Common myeloid progenitor, CD34-positive (primary cell): ENCODE measurements at regions of chr1 and their contacts with region 1.

Region 1: DNA sequence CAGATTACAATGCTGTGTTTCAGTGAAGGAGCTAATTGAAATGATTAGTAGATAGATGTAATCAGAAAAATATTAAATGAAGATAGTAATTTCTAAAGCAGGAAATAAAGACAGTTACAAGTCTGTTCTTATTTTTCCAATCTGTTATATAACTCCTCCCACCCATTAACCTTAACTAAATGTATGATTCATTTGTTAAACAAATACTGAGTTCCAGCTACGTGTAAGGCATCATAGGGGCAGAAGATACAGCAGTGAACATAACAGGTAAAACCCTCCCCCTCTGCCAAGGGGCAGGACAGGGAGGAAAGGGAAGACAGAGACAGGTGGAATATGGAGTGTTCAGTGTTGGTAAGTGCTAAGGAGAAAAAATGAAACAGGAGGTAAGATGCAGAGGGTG is at the start of gene FAM177B:
- DNase-seq: no peak
- H3K4me3 ChIP-seq: no peak within 1 kb of the TSS
- H3K27ac ChIP-seq: no peak within 1 kb of the TSS
- H3K4me1 ChIP-seq: no peaks in the 10 kb centered on the region
- H3K27me3 ChIP-seq: no peaks in the 10 kb centered on the region

Region 2: GRCh38 chr1:222750651-222751050 is 13.7 kb after region 1 on chr1:
- CTCF ChIA-PET with region 1: interaction called, 11 read pairs
- POLR2A ChIA-PET with region 1: no interaction called
- DNase-seq: no peak
- H3K4me3 ChIP-seq: no peak overlapping the region
- H3K27ac ChIP-seq: no peak overlapping the region
- H3K4me1 ChIP-seq: peaks cover 0 to 6% (median 3%) of the 10 kb centered on the region in 4 experiments
- H3K27me3 ChIP-seq: no peaks in the 10 kb centered on the region

Region 3: DNA sequence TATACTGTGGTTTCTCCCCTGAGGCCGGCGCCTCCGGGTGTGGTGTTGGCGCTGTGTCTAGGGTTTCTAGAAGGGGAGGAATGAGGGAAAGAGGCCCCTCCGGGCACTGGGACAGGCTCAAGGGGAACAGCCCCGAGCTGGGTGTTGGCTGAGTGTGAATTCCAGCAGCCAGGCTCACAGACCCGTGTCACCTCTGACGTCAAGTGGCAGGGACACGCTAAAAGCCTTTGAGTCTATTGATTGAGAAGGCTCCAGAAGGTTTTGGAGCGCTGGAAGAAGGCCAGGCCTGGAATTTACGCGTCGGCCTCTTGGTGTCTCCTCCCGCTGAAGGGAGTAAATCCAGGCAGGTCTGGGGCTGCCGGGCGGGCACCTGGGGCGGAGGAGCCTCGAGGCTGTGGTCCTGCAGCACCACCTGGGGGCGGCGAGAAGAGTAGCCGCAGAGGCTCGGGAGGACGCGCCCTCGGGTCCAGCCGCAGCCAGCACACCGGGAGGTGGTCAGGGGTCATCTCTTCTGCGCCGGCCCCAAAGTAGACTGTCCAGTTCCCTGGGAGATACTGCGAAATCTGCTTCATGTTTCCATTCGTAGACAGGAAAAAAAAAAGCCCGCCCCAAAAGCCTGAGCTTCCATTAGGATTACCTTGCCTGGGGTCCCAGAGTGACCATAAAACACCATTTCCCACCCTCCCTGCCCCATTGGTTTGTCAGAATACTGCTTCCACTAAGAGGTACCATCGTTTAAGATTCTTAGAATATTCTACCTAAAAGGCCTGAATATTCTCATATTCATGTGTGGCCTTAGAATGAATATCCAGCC is 344.4 kb after region 1 on chr1:
- CTCF ChIA-PET with region 1: interaction called, 14 read pairs
- POLR2A ChIA-PET with region 1: no interaction called
- DNase-seq: peak; percentile 94 to 96 (median 95)
- H3K4me3 ChIP-seq: peak overlapping the region in 6 of 7 experiments; percentile 47 to 76 (median 65)
- H3K27ac ChIP-seq: no peak overlapping the region
- H3K4me1 ChIP-seq: peaks cover 0 to 3% (median 1%) of the 10 kb centered on the region in 4 experiments
- H3K27me3 ChIP-seq: no peaks in the 10 kb centered on the region